ENCODE measurements at regions of chr16 and their contacts with region 1.

Region 1: GRCh38 chr16:58098207-58099096 is 30.7 kb downstream of the CFAP20 start:
- DNase-seq: no peak
- H3K4me3 ChIP-seq: no peak overlapping the region
- H3K27ac ChIP-seq: no peak overlapping the region
- H3K4me1 ChIP-seq: peaks cover 0 to 6% (median under 1%) of the 10 kb centered on the region in 4 experiments; a peak in 5 of 7 replicates
- H3K27me3 ChIP-seq: no peaks in the 10 kb centered on the region
- CTCF ChIP-seq: no peak
- EP300 ChIP-seq: no peak
- POLR2A ChIP-seq: no peak
- RAD21 ChIP-seq: no peak

Region 2: DNA sequence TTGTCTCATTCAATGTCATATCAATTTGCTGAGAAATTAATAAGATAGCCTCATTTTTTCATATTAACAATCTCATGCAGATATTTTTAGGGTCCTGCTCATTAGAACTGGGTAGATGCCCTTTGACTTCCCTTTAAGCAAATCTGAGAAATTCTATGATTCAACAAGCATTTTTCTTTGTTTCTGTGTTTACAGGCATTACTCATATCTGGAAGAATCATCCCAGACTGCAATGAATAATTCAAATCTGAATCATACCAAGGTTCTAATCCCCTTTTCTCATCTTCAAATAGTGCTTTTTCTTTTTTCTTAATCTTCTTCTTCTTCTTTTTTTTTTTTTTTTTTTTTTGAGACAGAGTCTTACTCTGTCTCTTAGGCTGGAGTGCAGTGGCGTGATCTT is 227.0 kb before region 1 on chr16:
- CTCF ChIA-PET with region 1: no interaction called
- POLR2A ChIA-PET with region 1: no interaction called
- DNase-seq: no peak
- H3K4me3 ChIP-seq: no peak overlapping the region
- H3K27ac ChIP-seq: no peak overlapping the region
- H3K4me1 ChIP-seq: peaks cover 0 to 6% (median 4%) of the 10 kb centered on the region in 4 experiments; a peak in 4 of 7 replicates
- H3K27me3 ChIP-seq: no peaks in the 10 kb centered on the region
- CTCF ChIP-seq: no peak
- EP300 ChIP-seq: no peak
- POLR2A ChIP-seq: no peak
- RAD21 ChIP-seq: no peak

Region 3: DNA sequence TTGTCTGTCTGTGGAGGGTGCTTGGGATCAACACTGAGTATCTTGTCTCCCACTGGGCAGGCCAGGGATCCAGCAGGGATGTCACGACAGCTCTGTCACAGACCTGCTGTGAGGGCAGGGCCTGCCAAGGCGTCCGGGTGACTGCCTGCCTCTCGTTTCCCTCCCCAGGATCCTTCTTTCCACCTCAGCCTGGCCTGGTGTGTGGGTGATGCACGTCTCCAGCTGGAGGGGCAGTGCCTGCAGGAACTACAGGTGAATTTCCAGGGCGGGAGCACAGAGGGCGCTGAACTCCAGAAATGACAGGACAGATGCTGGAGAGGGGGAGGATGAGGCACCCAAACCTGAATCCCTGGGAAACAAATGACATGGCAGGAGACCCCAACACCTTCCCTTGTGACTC is 79.6 kb before region 1 on chr16:
- CTCF ChIA-PET with region 1: interaction called, 18 read pairs
- POLR2A ChIA-PET with region 1: interaction called, 3 read pairs
- DNase-seq: peak in 1 of 2 experiments; percentile 69
- H3K4me3 ChIP-seq: no peak overlapping the region
- H3K27ac ChIP-seq: no peak overlapping the region
- H3K4me1 ChIP-seq: peaks cover 0 to 12% (median 7%) of the 10 kb centered on the region in 4 experiments; a peak in 5 of 7 replicates
- H3K27me3 ChIP-seq: no peaks in the 10 kb centered on the region; a peak in 2 of 7 replicates
- CTCF ChIP-seq: peak; percentile 54 to 76 (median 74)
- EP300 ChIP-seq: no peak
- POLR2A ChIP-seq: no peak
- RAD21 ChIP-seq: peak; percentile 52 to 64; a peak in 3 of 4 replicates

Region 4: DNA sequence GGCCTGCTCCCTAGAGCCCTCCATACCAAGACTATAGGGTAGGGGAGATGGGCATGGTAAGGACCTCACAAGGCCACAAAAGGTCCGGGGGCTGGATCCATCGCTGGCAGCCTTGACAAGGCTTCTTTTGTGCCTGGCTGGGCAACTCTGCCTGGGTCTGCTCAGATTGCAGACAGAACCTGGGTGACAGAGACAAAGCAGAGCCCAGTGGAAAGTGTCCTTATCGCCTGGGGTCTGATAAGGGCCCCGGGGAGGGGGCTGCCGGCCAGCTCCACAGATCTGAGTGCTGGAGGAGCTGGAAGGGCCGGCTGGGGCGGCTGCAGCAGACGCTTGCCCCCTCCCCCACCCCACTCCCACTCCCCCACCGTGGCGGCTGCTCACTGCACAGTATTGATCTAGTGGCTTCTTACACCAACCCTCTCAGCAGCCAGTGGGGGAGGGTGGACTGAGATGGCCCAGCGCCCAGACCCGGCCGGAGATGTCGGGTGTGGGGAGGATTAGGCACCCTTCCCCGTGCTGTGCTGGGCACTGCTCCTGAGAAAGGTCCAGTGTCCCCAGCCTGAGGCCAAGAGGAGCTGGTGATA is 65.7 kb before region 1 on chr16:
- CTCF ChIA-PET with region 1: interaction called, 40 read pairs
- POLR2A ChIA-PET with region 1: interaction called, 3 read pairs
- DNase-seq: no peak
- H3K4me3 ChIP-seq: no peak overlapping the region
- H3K27ac ChIP-seq: no peak overlapping the region
- H3K4me1 ChIP-seq: peaks cover 0 to 23% (median 15%) of the 10 kb centered on the region in 4 experiments; a peak in 6 of 7 replicates
- H3K27me3 ChIP-seq: no peaks in the 10 kb centered on the region
- CTCF ChIP-seq: no peak
- EP300 ChIP-seq: no peak
- POLR2A ChIP-seq: no peak
- RAD21 ChIP-seq: no peak

Region 5: DNA sequence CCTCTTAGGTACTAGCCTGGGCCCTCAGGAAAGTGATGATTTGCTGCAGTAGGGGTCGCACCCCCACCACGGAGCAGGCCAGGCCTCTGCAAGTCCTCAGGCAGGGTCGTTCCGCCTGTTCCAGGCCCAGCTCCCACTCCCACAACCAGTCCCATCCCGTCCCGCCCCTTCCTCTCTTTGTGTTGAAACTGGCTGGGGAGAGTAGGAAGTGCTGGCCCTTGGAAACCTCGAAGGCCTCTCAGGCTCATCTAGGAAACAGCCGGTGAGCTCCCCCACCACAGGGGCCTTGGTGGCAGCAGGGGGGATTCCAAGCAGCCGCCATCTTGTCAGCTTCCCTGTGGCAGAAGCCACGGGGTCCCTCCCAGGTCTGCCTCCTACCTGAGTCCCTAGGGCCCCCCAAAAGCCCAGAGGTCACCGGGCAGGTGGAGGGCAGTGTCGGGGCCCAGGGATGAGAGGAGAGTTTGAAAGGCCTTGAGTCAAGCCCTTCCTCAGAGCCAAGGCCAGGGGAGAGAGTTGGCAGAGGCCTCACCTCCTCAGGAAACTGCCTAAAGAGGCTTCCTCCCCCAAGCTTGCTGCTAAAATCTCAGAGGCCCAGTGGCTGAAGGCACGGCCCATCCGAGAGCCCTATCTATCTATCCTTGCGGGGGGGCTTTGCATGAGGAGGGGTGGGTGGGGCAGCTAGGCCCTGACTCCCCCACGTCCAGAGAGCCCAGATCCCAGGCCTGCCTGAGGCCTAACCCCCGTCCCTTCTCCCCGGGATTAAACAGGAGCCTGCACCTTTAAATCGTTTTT is 50.7 kb before region 1 on chr16:
- CTCF ChIA-PET with region 1: interaction called, 13 read pairs
- POLR2A ChIA-PET with region 1: interaction called, 3 read pairs
- DNase-seq: no peak
- H3K4me3 ChIP-seq: no peak overlapping the region
- H3K27ac ChIP-seq: no peak overlapping the region
- H3K4me1 ChIP-seq: peaks cover 0 to 15% (median 8%) of the 10 kb centered on the region in 4 experiments; a peak in 4 of 7 replicates
- H3K27me3 ChIP-seq: no peaks in the 10 kb centered on the region
- CTCF ChIP-seq: peak in 2 of 3 experiments; percentile 10 to 15; a peak in 1 of 4 replicates
- EP300 ChIP-seq: no peak
- POLR2A ChIP-seq: no peak
- RAD21 ChIP-seq: peak; percentile 50 to 51

Region 6: GRCh38 chr16:58088091-58088490 is 10.4 kb before region 1 on chr16:
- CTCF ChIA-PET with region 1: interaction called, 10 read pairs
- POLR2A ChIA-PET with region 1: no interaction called
- DNase-seq: no peak
- H3K4me3 ChIP-seq: no peak overlapping the region
- H3K27ac ChIP-seq: no peak overlapping the region
- H3K4me1 ChIP-seq: peaks cover 0 to 10% (median 4%) of the 10 kb centered on the region in 4 experiments; a peak in 3 of 7 replicates
- H3K27me3 ChIP-seq: no peaks in the 10 kb centered on the region
- CTCF ChIP-seq: no peak
- EP300 ChIP-seq: no peak
- POLR2A ChIP-seq: no peak
- RAD21 ChIP-seq: no peak

Region 7: GRCh38 chr16:58129097-58129936 is 30.9 kb after region 1 on chr16 and contains the start of gene CFAP20:
- CTCF ChIA-PET with region 1: interaction called, 19 read pairs
- POLR2A ChIA-PET with region 1: interaction called, 4 read pairs
- DNase-seq: peak; percentile 95 to 98
- H3K4me3 ChIP-seq: peak within 1 kb of the TSS; percentile 76 to 95 (median 82)
- H3K27ac ChIP-seq: peak within 1 kb of the TSS; percentile 80; the same call in 1 of the 2 replicates
- H3K4me1 ChIP-seq: peaks cover 2 to 8% (median 5%) of the 10 kb centered on the region in 4 experiments; a peak in 5 of 7 replicates
- H3K27me3 ChIP-seq: no peaks in the 10 kb centered on the region
- CTCF ChIP-seq: no peak
- EP300 ChIP-seq: no peak
- POLR2A ChIP-seq: peak; percentile 62 to 90
- RAD21 ChIP-seq: no peak
- total RNA-seq, gene CFAP20: 43.4 and 45.6 TPM in 2 replicates

Region 8: GRCh38 chr16:58160855-58161254 is 62.4 kb after region 1 on chr16:
- CTCF ChIA-PET with region 1: no interaction called
- POLR2A ChIA-PET with region 1: no interaction called
- DNase-seq: no peak
- H3K4me3 ChIP-seq: no peak overlapping the region
- H3K27ac ChIP-seq: no peak overlapping the region
- H3K4me1 ChIP-seq: no peaks in the 10 kb centered on the region; a peak in 1 of 7 replicates
- H3K27me3 ChIP-seq: no peaks in the 10 kb centered on the region
- CTCF ChIP-seq: no peak
- EP300 ChIP-seq: no peak
- POLR2A ChIP-seq: no peak
- RAD21 ChIP-seq: no peak

Measured in H1 (cell line).